ENCODE measurements at regions of chr2 and their contacts with region 1.

Region 1: GRCh38 chr2:241574911-241575623 is 16.5 kb downstream of the BOK start:
- DNase-seq: peak; percentile 42

Region 2: DNA sequence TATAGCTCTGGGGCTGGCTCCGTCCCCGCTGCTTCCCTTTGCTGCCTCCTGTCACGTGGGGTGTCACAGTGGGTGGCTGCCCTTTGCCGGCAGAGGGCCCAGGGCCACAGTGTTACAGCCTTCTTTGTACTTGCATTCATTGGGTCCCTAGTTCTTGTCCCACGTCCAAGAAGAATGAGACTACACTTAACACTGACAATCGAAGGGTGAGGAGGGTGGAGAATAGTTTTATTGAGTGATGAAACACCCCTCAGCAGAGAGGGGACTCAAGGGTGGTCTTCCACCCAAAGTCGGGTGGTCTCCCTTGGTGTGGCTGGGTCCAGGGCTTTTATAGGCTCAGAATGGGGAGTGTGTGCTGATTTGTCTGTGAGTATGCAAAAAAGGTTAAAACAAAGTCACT is 64.3 kb after region 1 on chr2:
- intact Hi-C with region 1: loop called in 1 of 2 experiments (anchors 1 kb)
- DNase-seq: no peak

Measured in posterior vena cava (tissue), 2 donors.